Left cardiac atrium (tissue), 4 donors: ENCODE measurements at regions of chr10 and their contacts with region 1.

Region 1: DNA sequence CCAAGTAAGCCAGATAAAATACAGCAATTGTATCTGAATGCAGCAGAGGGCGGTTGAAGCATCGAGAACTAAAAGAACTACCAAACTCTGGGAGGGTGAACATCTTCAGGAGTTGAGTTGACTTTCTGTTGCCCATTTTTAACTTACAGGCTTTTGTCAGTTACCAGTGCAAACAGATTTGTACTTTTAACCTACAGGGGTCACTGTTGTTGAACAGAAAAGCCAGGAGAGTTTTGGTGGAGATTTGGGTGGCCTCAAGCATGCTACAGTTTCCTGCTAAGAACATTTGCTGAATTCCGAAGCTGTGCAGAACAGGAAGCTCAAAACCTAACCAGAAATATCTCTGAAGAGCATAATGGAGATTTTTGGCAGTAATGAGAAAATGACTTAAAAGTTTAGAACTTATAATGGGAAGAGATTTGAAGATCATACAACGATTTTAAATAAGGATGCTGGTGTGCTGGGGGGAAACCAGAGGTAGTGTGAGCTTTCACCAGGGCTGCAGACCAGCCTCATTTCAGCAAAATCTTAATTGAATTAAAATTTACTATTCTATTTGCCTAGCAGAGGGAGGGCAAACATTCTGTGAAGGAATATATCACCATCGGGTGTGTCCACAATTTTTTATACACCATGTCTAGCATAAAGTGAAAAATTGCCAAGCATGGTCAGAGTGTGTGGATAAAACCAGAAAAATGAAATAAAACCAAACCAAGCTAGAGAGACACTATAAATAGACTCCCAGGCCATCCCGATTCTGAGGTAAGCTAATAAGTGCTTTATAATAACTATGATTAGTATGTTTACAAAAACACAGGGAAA is 208.6 kb upstream of the CCDC6 start:
- DNase-seq: no peak
- ATAC-seq: peak; percentile 50 to 68

Region 2: DNA sequence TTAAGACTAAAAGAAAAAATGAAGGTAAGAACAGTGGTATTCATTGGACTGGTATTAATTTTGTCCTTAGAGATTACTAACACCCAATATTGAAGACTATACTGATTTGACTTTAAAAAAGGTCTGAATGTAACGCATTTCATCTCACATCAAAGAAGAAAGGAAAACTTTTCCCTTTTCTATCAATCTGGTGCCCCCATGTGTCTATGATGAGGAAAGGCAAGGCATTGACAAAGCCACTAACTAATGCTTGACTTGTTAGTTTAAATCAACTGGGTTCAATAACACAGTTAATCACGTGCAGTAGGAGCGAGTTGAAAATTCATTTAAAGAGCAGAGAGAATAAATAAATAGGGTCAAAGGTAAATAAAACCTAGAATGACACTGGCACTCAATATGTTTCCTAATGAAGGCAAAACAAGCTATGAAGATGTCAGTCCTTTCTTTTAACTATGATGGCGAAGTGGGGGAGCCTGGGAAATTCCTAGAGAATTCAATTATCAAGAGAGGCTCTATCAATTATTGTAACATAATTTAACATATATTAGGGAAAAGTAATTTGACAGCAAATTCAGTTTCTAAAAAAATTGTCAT is 93.8 kb after region 1 on chr10:
- intact Hi-C with region 1: loop called in 1 of 2 experiments (anchors 10 kb)
- DNase-seq: no peak
- ATAC-seq: peak; percentile 35 to 41